Keratinocyte (primary cell): ENCODE measurements at regions of chr1 and their contacts with region 1.

Region 1: DNA sequence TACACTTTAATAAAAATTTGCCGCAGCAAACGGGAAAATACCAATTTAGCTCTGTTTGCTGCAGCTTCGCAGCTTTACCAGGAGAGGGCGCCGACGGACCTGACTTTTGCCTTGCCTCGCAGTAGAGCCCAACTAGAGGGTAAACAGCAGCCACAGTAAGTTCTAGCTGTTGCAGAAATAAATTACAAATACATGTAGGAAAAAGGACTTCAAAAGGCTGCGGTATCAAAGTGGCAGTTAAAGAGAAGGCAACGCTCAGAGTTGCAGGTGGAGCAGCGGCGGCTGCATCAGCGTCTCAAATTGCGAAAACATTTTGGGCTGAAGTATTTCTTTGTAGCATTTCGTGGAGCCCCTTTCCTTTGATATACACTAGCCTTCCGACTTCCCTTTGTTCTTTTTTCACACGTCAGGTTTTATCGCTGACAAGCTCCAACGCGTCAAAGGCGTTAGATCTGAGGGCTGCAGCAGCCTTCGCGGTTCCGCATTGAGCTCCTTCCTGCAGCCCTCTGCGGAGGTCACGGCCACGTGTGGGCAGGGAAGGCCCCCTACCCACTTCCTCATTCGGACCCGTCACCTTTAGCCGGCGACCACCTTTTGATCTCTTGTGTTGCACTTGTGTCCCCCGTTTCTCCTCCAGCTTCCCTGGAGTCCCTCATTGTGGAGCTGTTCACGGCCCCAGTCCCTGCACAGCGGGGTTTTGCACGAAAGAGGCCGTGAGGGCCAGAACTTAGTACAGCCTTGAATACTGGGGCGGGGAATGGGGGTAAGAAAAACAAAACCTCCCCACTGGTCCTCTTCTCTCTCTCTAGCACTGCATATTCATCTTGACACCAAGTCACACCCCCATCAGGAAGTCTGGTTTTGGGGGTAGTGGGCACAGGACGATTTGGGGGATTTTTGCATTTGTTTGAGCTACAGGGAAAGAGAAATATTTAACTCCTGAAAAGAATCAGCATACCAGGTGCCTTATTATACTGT is 72.8 kb downstream of the S1PR1 start:
- DNase-seq: no peak
- H3K4me3 ChIP-seq: peak overlapping the region in 2 of 3 experiments; percentile 42 to 44
- H3K27ac ChIP-seq: no peak overlapping the region
- H3K4me1 ChIP-seq: peaks cover 6% of the 10 kb centered on the region
- H3K27me3 ChIP-seq: peaks cover 18% of the 10 kb centered on the region
- CTCF ChIP-seq: peak; percentile 80 to 88 (median 85)

Region 2: DNA sequence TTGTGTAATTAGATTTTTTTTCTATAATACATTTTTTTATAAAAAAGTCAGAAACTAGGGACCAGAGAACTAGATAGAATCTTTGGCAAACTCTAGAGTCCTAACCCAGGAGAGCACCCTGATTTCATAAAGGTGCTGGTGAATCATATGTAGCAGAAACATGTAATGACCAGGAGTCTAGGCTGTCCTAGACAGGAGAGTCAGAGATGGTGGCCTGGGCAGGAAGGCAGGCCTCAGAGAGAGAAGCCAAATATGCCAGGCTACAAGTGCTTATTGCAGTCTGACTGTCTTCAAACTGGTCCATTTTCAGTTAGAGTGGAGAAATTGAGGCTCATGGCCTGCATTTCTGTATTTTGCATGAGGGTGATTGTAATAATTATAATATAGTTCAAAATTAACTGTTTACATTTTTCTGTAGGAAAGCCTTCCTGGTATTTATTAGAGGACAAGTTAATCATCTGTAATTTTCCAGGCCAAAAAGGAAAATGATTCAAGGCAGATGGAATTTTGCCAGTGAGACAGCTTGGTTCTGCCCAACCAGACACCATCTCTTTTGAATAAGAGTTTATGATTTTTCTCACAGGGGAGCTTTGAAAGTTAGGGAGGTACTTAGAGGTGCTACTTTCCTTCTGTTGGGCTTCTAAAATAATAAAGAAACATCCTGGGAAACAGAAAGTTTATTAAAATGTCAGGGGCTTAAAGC is 57.0 kb after region 1 on chr1:
- dilution Hi-C with region 1: loop called (anchors 10 kb)
- DNase-seq: no peak
- H3K4me3 ChIP-seq: no peak overlapping the region
- H3K27ac ChIP-seq: no peak overlapping the region
- H3K4me1 ChIP-seq: no peaks in the 10 kb centered on the region
- H3K27me3 ChIP-seq: no peaks in the 10 kb centered on the region
- CTCF ChIP-seq: no peak